ENCODE measurements at regions of chr3 and their contacts with region 1.

Region 1: DNA sequence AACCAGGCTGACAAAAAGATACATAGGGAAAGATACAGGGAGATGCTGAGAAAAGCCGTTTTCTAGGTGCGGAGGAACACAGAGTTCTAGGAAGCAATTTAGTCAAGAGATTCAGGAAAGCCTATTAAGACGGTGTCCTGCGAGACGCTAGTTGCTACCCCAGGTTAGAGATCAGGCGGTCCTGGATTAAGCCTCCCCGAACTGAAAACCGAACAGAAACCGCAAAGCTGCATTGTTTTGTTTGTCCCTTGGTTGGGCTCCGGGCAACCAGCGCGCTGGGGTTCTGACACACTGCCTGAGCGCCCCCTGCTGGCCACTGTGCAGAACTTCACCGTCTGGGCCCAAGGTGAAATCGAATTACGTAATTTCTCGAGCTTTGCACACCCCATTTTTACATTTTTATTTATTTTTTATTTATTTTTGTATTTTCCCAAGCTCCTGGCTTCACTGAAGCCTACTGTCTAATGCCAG is 37.3 kb upstream of the NDUFB4 start:
- DNase-seq: peak; percentile 94
- ATAC-seq: peak; percentile 87
- H3K4me3 ChIP-seq: peak overlapping the region; percentile 24 to 69 (median 55)
- H3K4me3 Mint-ChIP-seq: peak overlapping the region; percentile 89
- H3K27ac ChIP-seq: peak overlapping the region in 1 of 2 donors; percentile 60
- H3K27ac Mint-ChIP-seq: peak overlapping the region; percentile 83
- H3K4me1 ChIP-seq: peaks cover 12 to 15% of the 10 kb centered on the region in 2 donors
- H3K4me1 Mint-ChIP-seq: peaks cover 19% of the 10 kb centered on the region
- H3K27me3 ChIP-seq: peaks cover 0 to 14% (median 9%) of the 10 kb centered on the region in 4 experiments
- H3K27me3 Mint-ChIP-seq: peaks cover 18% of the 10 kb centered on the region
- CTCF ChIP-seq: peak; percentile 96

Region 2: GRCh38 chr3:119819806-119820205 is 739.0 kb before region 1 on chr3:
- CTCF ChIA-PET with region 1: no interaction called
- POLR2A ChIA-PET with region 1: no interaction called
- intact Hi-C with region 1: loop called (anchors 5 kb)
- DNase-seq: no peak
- ATAC-seq: no peak
- H3K4me3 ChIP-seq: no peak overlapping the region
- H3K4me3 Mint-ChIP-seq: no peak overlapping the region
- H3K27ac ChIP-seq: no peak overlapping the region
- H3K27ac Mint-ChIP-seq: no peak overlapping the region
- H3K4me1 ChIP-seq: no peaks in the 10 kb centered on the region
- H3K4me1 Mint-ChIP-seq: no peaks in the 10 kb centered on the region
- H3K27me3 ChIP-seq: peaks cover 0 to 2% (median 0%) of the 10 kb centered on the region in 4 experiments
- H3K27me3 Mint-ChIP-seq: no peaks in the 10 kb centered on the region
- CTCF ChIP-seq: no peak

Region 3: GRCh38 chr3:120348981-120349818 is 209.6 kb before region 1 on chr3 and contains the start of gene LRRC58:
- CTCF ChIA-PET with region 1: no interaction called
- POLR2A ChIA-PET with region 1: no interaction called
- intact Hi-C with region 1: loop called (anchors 2 kb)
- DNase-seq: peak; percentile 95
- ATAC-seq: peak; percentile 89
- H3K4me3 ChIP-seq: peak within 1 kb of the TSS; percentile 61 to 99 (median 88)
- H3K4me3 Mint-ChIP-seq: peak within 1 kb of the TSS; percentile 95
- H3K27ac ChIP-seq: peak within 1 kb of the TSS; percentile 63 to 85
- H3K27ac Mint-ChIP-seq: peak within 1 kb of the TSS; percentile 94
- H3K4me1 ChIP-seq: peaks cover 14 to 17% of the 10 kb centered on the region in 2 donors
- H3K4me1 Mint-ChIP-seq: peaks cover 41% of the 10 kb centered on the region
- H3K27me3 ChIP-seq: peaks cover 0 to 10% (median 0%) of the 10 kb centered on the region in 4 experiments
- H3K27me3 Mint-ChIP-seq: no peaks in the 10 kb centered on the region
- CTCF ChIP-seq: peak; percentile 25
- total RNA-seq, gene LRRC58: 16.7 TPM in 2 replicates

Region 4: GRCh38 chr3:120596116-120596852 is 37.5 kb after region 1 on chr3 and contains the start of gene NDUFB4:
- CTCF ChIA-PET with region 1: interaction called, 13 read pairs
- POLR2A ChIA-PET with region 1: no interaction called
- intact Hi-C with region 1: loop called (anchors 1 kb)
- DNase-seq: peak; percentile 97
- ATAC-seq: peak; percentile 97
- H3K4me3 ChIP-seq: peak within 1 kb of the TSS; percentile 59 to 94 (median 86)
- H3K4me3 Mint-ChIP-seq: peak within 1 kb of the TSS; percentile 92
- H3K27ac ChIP-seq: peak within 1 kb of the TSS; percentile 72 to 95
- H3K27ac Mint-ChIP-seq: peak within 1 kb of the TSS; percentile 96
- H3K4me1 ChIP-seq: peaks cover 15 to 19% of the 10 kb centered on the region in 2 donors
- H3K4me1 Mint-ChIP-seq: peaks cover 11% of the 10 kb centered on the region
- H3K27me3 ChIP-seq: no peaks in the 10 kb centered on the region
- H3K27me3 Mint-ChIP-seq: no peaks in the 10 kb centered on the region
- CTCF ChIP-seq: no peak
- total RNA-seq, gene NDUFB4: 58.1 and 68.4 TPM in 2 replicates

Region 5: GRCh38 chr3:120795017-120795648 is 236.3 kb after region 1 on chr3:
- CTCF ChIA-PET with region 1: interaction called, 126 read pairs
- POLR2A ChIA-PET with region 1: no interaction called
- intact Hi-C with region 1: loop called (anchors 1 kb)
- DNase-seq: peak; percentile 73
- ATAC-seq: peak; percentile 76
- H3K4me3 ChIP-seq: no peak overlapping the region
- H3K4me3 Mint-ChIP-seq: no peak overlapping the region
- H3K27ac ChIP-seq: no peak overlapping the region
- H3K27ac Mint-ChIP-seq: no peak overlapping the region
- H3K4me1 ChIP-seq: no peaks in the 10 kb centered on the region
- H3K4me1 Mint-ChIP-seq: no peaks in the 10 kb centered on the region
- H3K27me3 ChIP-seq: no peaks in the 10 kb centered on the region
- H3K27me3 Mint-ChIP-seq: no peaks in the 10 kb centered on the region
- CTCF ChIP-seq: peak; percentile 76

Region 6: GRCh38 chr3:121529308-121529707 is 970.5 kb after region 1 on chr3:
- CTCF ChIA-PET with region 1: no interaction called
- POLR2A ChIA-PET with region 1: no interaction called
- intact Hi-C with region 1: no loop called
- DNase-seq: no peak
- ATAC-seq: no peak
- H3K4me3 ChIP-seq: no peak overlapping the region
- H3K4me3 Mint-ChIP-seq: no peak overlapping the region
- H3K27ac ChIP-seq: no peak overlapping the region
- H3K27ac Mint-ChIP-seq: no peak overlapping the region
- H3K4me1 ChIP-seq: no peaks in the 10 kb centered on the region
- H3K4me1 Mint-ChIP-seq: no peaks in the 10 kb centered on the region
- H3K27me3 ChIP-seq: no peaks in the 10 kb centered on the region
- H3K27me3 Mint-ChIP-seq: no peaks in the 10 kb centered on the region
- CTCF ChIP-seq: peak; percentile 41

Measured in B cell (primary cell).